ENCODE measurements at regions of chr5 and their contacts with region 1.

Region 1: GRCh38 chr5:16916262-16916865 is 19.7 kb downstream of the MYO10 start:
- DNase-seq: peak; percentile 86
- H3K4me3 ChIP-seq: no peak overlapping the region
- H3K27me3 ChIP-seq: no peaks in the 10 kb centered on the region
- CTCF ChIP-seq: no peak

Region 2: DNA sequence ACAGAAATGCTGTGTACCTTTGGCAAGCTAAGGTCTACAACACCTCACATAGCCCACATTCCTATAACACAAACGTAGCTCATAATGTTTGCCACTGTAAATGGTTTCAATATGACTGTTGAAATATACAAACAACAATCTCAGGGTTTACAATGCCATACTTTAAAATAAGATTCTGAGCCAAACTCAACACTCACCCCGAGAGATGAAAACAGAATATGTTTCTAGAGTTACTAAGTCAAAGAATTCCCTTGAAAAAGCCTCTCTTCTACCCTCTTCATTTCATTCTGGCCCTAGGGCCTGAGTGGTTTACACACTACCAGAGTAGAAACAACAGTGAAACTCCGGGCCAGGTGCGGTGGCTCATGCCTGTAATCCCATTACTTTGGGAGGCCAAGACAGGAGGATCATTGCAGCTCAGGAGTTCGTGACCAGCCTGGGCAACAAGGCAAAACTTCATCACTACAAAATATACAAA is 52.9 kb before region 1 on chr5:
- CTCF ChIA-PET with region 1: no interaction called
- POLR2A ChIA-PET with region 1: interaction called, 16 read pairs
- DNase-seq: no peak
- H3K4me3 ChIP-seq: no peak overlapping the region
- H3K27me3 ChIP-seq: no peaks in the 10 kb centered on the region
- CTCF ChIP-seq: no peak

Region 3: DNA sequence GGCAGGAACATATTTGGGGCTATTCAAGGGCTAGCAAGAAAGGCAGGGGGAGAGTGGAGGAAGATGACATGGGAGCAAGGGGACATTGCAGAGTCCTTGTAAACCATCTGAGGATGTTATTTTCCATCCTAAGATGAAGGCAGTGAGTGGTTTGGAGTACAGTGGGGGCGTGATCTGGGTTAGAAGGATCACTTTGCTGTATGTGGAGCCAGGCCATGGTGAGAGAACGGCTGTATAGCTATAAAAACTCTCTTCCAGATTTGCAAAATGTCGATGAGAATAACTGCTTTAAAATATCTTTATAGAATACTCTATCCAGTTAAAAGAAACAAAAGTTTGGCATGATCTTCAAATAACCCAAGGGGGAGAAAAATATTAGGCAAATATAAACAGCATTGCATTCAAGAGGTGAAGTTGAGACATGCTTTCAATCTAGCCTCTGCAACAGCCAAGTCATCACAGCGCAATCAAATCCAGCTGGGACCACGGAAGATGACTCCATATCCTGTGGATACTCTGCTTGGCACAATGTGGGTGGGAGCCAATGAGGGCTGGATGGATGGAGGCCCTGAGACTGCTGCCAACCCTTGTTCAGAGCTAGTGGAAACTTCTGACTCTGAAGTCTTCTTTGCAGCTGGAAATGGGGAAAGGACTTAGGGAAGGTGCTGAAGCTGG is 189.5 kb after region 1 on chr5:
- CTCF ChIA-PET with region 1: no interaction called
- POLR2A ChIA-PET with region 1: interaction called, 11 read pairs
- DNase-seq: peak; percentile 52
- H3K4me3 ChIP-seq: no peak overlapping the region
- H3K27me3 ChIP-seq: no peaks in the 10 kb centered on the region
- CTCF ChIP-seq: no peak